ENCODE measurements at regions of chr12 and their contacts with region 1.

Region 1: DNA sequence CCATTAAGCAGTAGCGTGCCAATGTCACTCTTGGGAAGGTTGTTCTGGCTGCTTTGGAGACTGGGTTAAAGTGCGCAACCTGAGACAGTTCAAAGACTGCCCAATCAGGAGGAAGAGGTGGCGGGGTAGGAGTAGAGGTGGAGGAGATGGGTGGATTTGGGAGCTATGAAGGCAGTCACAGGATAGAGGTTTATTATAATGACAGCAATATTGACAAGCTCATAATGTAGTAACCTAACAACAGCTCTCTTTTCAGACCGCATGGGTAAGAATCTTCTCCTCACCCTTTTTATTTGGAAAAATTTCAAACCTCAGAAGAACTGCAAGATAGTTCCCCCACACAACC is 5.3 kb upstream of the PSMD9 start:
- DNase-seq: no peak
- ATAC-seq: peak in 1 of 4 donors; percentile 33
- H3K4me3 ChIP-seq: no peak overlapping the region
- H3K27ac ChIP-seq: no peak overlapping the region
- H3K4me1 ChIP-seq: no peaks in the 10 kb centered on the region
- H3K27me3 ChIP-seq: no peaks in the 10 kb centered on the region
- CTCF ChIP-seq: no peak

Region 2: GRCh38 chr12:121175383-121176227 is 707.7 kb before region 1 on chr12:
- intact Hi-C with region 1: no loop called
- DNase-seq: peak in 1 of 2 donors; percentile 35
- ATAC-seq: no peak
- H3K4me3 ChIP-seq: no peak overlapping the region
- H3K27ac ChIP-seq: no peak overlapping the region
- H3K4me1 ChIP-seq: no peaks in the 10 kb centered on the region
- H3K27me3 ChIP-seq: no peaks in the 10 kb centered on the region
- CTCF ChIP-seq: no peak

Region 3: GRCh38 chr12:121536899-121537813 is 346.1 kb before region 1 on chr12:
- intact Hi-C with region 1: no loop called
- DNase-seq: peak; percentile 87 to 94
- ATAC-seq: peak; percentile 83 to 90 (median 88)
- H3K4me3 ChIP-seq: peak overlapping the region; percentile 95
- H3K27ac ChIP-seq: peak overlapping the region; percentile 92
- H3K4me1 ChIP-seq: peaks cover 20% of the 10 kb centered on the region
- H3K27me3 ChIP-seq: no peaks in the 10 kb centered on the region
- CTCF ChIP-seq: no peak

Region 4: GRCh38 chr12:121839993-121840761 is 43.1 kb before region 1 on chr12:
- intact Hi-C with region 1: loop called (anchors 5 kb)
- DNase-seq: no peak
- ATAC-seq: peak in 1 of 4 donors; percentile 2
- H3K4me3 ChIP-seq: peak overlapping the region; percentile 74
- H3K27ac ChIP-seq: peak overlapping the region; percentile 67
- H3K4me1 ChIP-seq: no peaks in the 10 kb centered on the region
- H3K27me3 ChIP-seq: no peaks in the 10 kb centered on the region
- CTCF ChIP-seq: no peak

Region 5: DNA sequence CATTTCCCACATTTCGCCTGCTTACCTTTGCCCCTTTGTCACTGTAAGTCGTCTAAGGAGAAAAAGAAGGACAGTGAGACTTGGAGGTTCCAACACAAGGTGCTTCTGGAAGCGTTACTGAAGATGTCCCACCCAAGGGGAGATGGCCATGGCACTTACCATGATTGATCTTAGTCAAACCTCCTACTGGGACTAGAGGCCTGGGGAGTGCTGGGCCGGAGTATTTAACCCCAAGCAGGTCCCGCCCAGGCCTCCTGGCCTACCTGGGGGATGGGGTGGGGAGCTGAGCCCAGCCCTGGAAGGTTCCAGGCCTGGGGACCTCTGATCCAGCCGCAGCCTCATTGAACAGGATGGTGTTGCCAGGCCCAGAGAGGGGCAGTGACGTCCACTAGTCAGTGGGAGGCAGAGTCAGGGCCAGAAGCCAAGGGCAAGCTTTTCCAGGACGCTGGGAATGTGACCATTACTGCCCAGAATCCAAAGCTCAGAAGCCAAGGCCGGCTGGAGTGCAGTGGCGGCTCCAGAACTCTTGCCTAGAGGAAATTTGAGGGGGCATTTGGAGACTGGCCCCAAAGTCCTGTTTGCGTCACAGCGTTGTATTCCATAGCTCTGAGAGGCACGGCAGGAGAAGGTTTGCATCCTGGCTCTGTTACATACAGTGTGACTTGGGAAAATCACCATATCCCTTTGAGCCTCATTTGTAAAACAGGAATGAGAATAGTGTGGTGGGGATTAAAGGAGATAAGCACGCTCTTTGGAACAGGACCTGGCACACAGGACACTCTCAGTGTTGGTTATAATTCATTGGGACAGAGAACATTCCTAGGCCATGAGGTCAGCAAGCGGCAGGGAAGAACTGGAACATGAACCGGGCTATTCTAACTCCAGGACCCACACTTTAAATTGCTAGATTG is 24.4 kb before region 1 on chr12 and contains the start of gene HPD:
- intact Hi-C with region 1: no loop called
- DNase-seq: peak; percentile 74 to 82
- ATAC-seq: peak; percentile 90 to 93 (median 92)
- H3K4me3 ChIP-seq: no peak within 1 kb of the TSS
- H3K27ac ChIP-seq: peak within 1 kb of the TSS; percentile 87
- H3K4me1 ChIP-seq: peaks cover 40% of the 10 kb centered on the region
- H3K27me3 ChIP-seq: no peaks in the 10 kb centered on the region
- CTCF ChIP-seq: no peak
- total RNA-seq, gene HPD: 1.1 to 3.3 (median 3.0) TPM

Measured in psoas muscle (tissue), 8 donors.